MCF 10A (cell line): ENCODE measurements at regions of chr10 and their contacts with region 1.

Region 1: GRCh38 chr10:45657033-45657926 is 15.3 kb downstream of the ZFAND4 start:
- DNase-seq: no peak
- H3K4me3 Mint-ChIP-seq: no peak overlapping the region
- H3K27ac Mint-ChIP-seq: no peak overlapping the region
- H3K4me1 Mint-ChIP-seq: no peaks in the 10 kb centered on the region
- H3K27me3 Mint-ChIP-seq: no peaks in the 10 kb centered on the region
- CTCF ChIP-seq: no peak

Region 2: GRCh38 chr10:45278860-45279498 is 378.3 kb before region 1 on chr10:
- CTCF ChIA-PET with region 1: no interaction called
- POLR2A ChIA-PET with region 1: no interaction called
- intact Hi-C with region 1: loop called (anchors 5 kb)
- DNase-seq: no peak
- H3K4me3 Mint-ChIP-seq: no peak overlapping the region
- H3K27ac Mint-ChIP-seq: no peak overlapping the region
- H3K4me1 Mint-ChIP-seq: no peaks in the 10 kb centered on the region
- H3K27me3 Mint-ChIP-seq: peaks cover 28% of the 10 kb centered on the region
- CTCF ChIP-seq: no peak

Region 3: DNA sequence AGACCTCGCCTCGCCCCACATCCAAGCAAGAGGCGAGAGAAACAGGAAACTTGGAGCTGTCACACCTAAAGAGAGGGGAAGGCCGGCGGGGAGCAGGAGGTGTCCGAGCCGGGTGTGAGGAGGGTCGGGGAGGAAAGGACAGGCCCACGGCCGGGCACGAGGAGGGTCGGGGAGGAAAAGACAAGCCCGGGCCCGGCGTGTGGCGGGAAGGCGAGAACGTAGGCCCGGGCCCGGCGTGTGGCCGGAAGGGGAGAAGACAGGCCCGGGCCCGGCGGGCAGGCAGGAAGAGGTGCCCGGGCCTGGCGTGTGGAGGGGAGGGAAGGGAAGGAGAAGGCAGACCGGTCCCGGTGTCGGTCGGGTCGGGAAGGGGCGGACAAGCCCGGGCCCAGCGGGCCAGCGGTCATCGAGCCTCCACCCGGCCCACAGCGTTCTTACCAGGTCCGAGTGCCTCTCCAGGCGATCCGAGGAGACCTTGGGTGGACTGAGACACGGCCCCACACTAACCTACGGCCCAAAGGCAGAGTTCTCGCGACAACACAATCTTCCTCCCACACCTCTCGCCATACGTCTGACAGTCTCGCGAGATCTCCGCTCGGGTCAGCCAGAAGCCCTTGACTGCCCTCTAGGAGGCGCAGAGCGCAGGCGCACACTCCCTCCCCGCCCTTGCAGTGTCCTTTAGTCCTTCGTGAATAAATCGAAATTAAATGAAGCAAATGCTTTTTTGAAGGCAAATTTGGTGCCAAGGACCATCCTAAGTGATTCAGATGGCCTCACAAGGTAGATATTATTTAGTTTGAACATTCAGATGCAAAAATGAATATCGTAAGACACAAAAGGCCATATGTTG is 373.0 kb after region 1 on chr10 and contains the start of gene NCOA4:
- CTCF ChIA-PET with region 1: no interaction called
- POLR2A ChIA-PET with region 1: no interaction called
- intact Hi-C with region 1: no loop called
- DNase-seq: peak; percentile 97
- H3K4me3 Mint-ChIP-seq: peak within 1 kb of the TSS; percentile 97
- H3K27ac Mint-ChIP-seq: peak within 1 kb of the TSS; percentile 99
- H3K4me1 Mint-ChIP-seq: peaks cover 23% of the 10 kb centered on the region
- H3K27me3 Mint-ChIP-seq: no peaks in the 10 kb centered on the region
- CTCF ChIP-seq: peak; percentile 52
- total RNA-seq, gene NCOA4: 73.5 and 81.6 TPM in 2 replicates